Posterior cingulate gyrus (tissue), 11 donors: ENCODE measurements at regions of chr1 and their contacts with region 1.

Region 1: DNA sequence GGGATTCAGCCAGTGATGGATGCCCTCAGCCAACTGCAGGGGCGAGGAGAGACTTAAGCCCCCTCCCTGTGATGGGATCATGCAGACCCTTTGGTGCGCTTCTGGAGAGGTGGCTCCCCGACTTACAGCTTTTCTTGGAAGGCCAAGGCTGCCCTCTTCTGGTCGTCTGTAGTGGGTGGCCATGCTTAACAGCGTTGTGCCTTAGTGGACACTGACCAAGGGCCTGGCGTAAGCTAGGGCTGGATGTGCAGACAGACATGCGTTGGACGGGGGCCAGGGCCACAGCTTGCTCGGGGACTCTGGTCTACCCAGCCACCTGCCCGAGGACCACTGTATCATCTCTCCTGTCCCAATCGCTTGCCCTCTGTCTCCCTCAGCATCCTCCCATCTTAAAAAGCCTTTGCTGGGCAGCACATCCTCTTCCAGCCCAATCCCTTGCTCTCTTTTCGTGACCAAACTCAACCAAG is 5.5 kb downstream of the AZIN2 start:
- DNase-seq: peak; percentile 70 to 97 (median 86)

Region 2: DNA sequence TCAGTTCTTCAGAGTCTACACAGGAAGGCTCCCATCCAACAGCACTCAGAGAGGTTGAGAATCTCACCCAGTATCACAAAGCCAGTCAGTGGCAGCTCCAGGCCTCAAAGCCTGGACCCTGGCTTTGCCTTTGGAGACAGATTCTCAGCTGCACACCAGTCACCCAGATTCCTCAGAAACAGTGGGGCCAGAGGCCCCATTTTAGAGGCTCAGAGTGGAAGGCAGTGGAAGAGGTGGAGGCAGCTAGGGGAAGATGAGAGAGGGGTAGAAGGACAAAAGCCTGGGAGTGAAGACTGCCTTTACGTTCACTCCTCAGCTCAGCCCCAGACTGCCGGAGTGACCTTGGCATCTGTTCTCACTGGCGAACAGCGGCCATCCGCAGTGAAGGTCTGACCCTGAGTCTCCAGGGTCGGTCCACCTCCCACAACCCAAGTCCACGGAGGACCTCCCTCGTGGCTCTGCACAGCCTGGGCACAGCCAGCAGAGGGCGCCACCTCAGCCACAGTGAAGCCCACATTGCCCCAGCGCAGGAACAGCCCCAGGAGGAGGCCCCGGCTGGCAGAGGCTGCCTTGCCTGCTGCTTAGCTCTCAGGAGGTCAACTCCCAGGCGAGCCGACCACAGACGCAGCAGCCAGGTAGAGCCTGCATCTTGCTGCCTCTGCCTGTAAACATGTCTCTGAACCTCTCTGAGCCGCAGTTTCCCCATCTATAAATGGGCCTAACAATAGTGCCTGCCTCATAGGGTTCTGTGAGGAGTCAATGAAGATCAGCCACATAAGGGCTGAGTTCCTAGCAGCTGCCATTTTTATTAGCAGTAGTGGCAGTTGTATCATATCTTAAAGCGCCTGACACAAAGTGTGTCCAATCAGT is 209.8 kb before region 1 on chr1:
- intact Hi-C with region 1: loop called (anchors 5 kb)
- DNase-seq: peak in 8 of 10 donors; percentile 49 to 92 (median 66)

Region 3: GRCh38 chr1:32933742-32934322 is 152.6 kb before region 1 on chr1:
- intact Hi-C with region 1: loop called (anchors 1 kb)
- DNase-seq: no peak

Region 4: DNA sequence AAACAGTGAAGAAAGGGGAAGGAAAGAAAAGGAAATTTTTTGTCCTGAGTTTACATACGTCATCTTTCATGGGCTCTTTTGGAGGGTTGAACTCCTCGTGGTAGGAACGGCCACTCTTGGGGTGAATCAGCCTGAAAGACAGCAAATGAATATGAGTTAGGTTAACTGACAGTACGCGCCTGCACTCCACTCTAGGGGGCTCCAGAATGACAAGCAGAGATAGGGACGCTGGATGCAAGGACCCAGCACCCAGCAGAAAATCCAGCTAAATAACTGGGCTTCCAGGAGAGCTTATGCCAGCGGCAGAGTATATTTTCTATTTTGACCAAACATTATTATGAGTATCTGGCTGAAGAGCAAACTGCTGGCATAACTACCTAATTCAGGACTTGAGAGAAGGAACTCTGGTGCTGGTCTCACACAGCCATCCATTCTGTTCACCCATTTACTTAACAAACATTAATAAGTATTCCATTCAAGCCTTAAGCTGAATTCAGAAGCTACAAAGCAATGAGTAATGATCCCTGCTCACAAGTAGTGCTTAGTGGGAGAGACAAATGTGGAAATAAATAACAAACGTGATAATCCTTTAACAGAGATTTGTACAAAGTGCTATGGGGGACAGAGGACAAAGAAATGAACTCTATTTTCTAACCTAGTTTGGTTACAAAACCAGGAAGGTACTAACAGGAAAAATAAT is 71.8 kb before region 1 on chr1:
- intact Hi-C with region 1: loop called (anchors 2 kb)
- DNase-seq: peak in 3 of 10 donors; percentile 20 to 45 (median 45)